Cardiac septum (tissue), 1 donor: ENCODE measurements at regions of chr3 and their contacts with region 1.

Region 1: GRCh38 chr3:25520926-25521559 is 93.0 kb downstream of the RARB start:
- DNase-seq: no peak

Region 2: GRCh38 chr3:25573386-25574171 is 52.5 kb after region 1 on chr3:
- intact Hi-C with region 1: loop called (anchors 5 kb)
- DNase-seq: peak; percentile 70